ENCODE measurements at regions of chr14 and their contacts with region 1.

Region 1: GRCh38 chr14:50714450-50715073 is 46.5 kb upstream of the SAV1 start:
- DNase-seq: no peak
- ATAC-seq: peak in 1 of 2 donors; percentile 54
- H3K4me3 ChIP-seq: no peak overlapping the region
- H3K27ac ChIP-seq: no peak overlapping the region
- H3K4me1 ChIP-seq: no peaks in the 10 kb centered on the region
- H3K27me3 ChIP-seq: no peaks in the 10 kb centered on the region
- CTCF ChIP-seq: peak; percentile 15 to 53 (median 30)
- POLR2A ChIP-seq: no peak

Region 2: GRCh38 chr14:50599700-50600444 is 114.7 kb before region 1 on chr14:
- in situ Hi-C with region 1: no loop called
- intact Hi-C with region 1: loop called (anchors 5 kb)
- DNase-seq: no peak
- ATAC-seq: peak in 1 of 2 donors; percentile 51
- H3K4me3 ChIP-seq: no peak overlapping the region
- H3K27ac ChIP-seq: no peak overlapping the region
- H3K4me1 ChIP-seq: no peaks in the 10 kb centered on the region
- H3K27me3 ChIP-seq: no peaks in the 10 kb centered on the region
- CTCF ChIP-seq: peak; percentile 29 to 61 (median 53)
- POLR2A ChIP-seq: no peak

Region 3: DNA sequence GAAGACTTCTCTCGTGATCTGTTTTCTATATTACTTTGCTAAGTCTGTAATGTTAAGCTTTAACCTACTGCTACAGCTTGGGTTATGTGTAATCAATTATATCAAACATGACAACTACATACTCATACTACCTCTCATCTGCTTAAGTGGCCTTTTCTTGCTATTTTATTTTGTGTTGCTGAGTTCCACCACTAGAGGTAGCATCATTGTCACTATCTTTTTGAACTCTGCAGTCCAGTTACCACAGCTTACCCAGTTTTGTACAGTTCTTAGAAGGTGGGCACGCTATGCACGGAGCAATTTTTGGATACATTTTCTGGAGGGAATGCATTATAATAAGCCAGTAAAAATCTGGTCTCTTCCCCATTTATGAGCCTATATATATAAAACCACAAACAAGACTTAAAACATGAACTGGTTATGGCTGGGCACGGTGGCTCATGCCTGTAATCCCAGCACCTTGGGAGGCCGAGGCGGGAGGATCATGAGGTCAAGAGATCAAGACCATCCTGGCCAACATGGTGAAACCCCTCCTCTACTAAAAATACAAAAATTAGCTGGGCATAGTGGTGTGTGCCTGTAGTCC is 94.9 kb before region 1 on chr14:
- in situ Hi-C with region 1: loop called in 1 of 4 experiments (anchors 10 kb)
- intact Hi-C with region 1: loop called (anchors 5 kb)
- DNase-seq: no peak
- ATAC-seq: no peak
- H3K4me3 ChIP-seq: no peak overlapping the region
- H3K27ac ChIP-seq: no peak overlapping the region
- H3K4me1 ChIP-seq: no peaks in the 10 kb centered on the region
- H3K27me3 ChIP-seq: no peaks in the 10 kb centered on the region
- CTCF ChIP-seq: peak in 4 of 5 experiments; percentile 36 to 54 (median 50)
- POLR2A ChIP-seq: no peak

Measured in gastrocnemius medialis (tissue), 4 donors.